Dorsolateral prefrontal cortex (tissue), 120 donors: ENCODE measurements at regions of chr6 and their contacts with region 1.

Region 1: GRCh38 chr6:46848684-46849360 is 55.6 kb downstream of the MEP1A start:
- DNase-seq: peak; percentile 64 to 92 (median 80)
- H3K4me3 ChIP-seq: peak overlapping the region in 39 of 59 donors; percentile 8 to 49 (median 28)
- H3K27ac ChIP-seq: peak overlapping the region in 1 of 59 donors; percentile 53
- H3K27me3 ChIP-seq: no peaks in the 10 kb centered on the region
- CTCF ChIP-seq: peak; percentile 84 to 99 (median 97)

Region 2: DNA sequence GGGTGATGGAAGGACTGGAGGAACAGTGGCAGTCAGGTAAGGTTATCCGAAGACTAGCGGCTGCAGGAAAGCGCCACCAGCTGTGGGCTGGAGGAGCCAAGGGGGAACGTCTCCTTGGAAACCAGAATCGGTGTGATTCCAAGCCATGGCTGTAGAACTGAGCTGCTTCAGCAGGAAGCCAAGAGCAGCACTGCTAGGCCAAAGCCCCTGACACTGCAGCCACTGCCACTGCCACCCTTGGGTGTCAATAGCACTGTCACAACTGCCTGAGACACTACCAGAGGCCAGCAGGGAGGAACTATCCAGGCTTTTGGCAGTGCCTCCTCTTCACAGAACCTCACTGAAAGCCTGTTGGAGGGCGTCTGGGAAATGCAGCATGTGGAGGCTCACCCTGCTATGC is 1181.5 kb before region 1 on chr6:
- intact Hi-C with region 1: no loop called
- DNase-seq: no peak
- H3K4me3 ChIP-seq: no peak overlapping the region
- H3K27ac ChIP-seq: no peak overlapping the region
- H3K27me3 ChIP-seq: peaks cover 0 to 36% (median 9%) of the 10 kb centered on the region in 45 donors
- CTCF ChIP-seq: no peak

Region 3: GRCh38 chr6:46932526-46933319 is 83.9 kb after region 1 on chr6:
- intact Hi-C with region 1: no loop called
- DNase-seq: no peak
- H3K4me3 ChIP-seq: no peak overlapping the region
- H3K27ac ChIP-seq: peak overlapping the region in 5 of 59 donors; percentile 6 to 36 (median 17)
- H3K27me3 ChIP-seq: no peaks in the 10 kb centered on the region
- CTCF ChIP-seq: no peak

Region 4: DNA sequence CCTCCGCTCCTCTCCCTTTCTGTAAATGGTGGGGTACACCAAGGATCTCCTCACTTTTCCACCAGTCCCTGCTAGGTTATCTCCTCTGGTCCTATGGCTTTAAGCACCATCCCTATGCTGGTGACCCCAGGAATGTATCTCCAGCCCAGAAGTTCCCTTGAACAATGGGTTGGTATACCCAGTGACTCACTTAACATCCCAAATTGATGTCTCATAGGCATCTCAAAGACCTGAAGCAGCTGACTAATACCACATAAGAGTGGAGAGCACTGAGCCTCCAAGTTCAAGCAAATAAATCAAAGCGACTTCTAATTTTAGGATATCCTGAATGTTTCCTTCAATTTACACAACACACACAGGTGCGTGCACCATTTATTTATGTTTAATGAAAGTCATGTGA is 145.0 kb after region 1 on chr6:
- intact Hi-C with region 1: loop called in 1 of 2 experiments (anchors 5 kb)
- DNase-seq: no peak
- H3K4me3 ChIP-seq: no peak overlapping the region
- H3K27ac ChIP-seq: no peak overlapping the region
- H3K27me3 ChIP-seq: peaks cover 0 to 11% (median 0%) of the 10 kb centered on the region in 45 donors
- CTCF ChIP-seq: no peak

Region 5: GRCh38 chr6:47047479-47048407 is 198.9 kb after region 1 on chr6:
- intact Hi-C with region 1: loop called (anchors 5 kb)
- DNase-seq: peak in 3 of 10 donors; percentile 38 to 54 (median 43)
- H3K4me3 ChIP-seq: peak overlapping the region in 1 of 59 donors; percentile 18
- H3K27ac ChIP-seq: peak overlapping the region in 1 of 59 donors; percentile 47
- H3K27me3 ChIP-seq: no peaks in the 10 kb centered on the region
- CTCF ChIP-seq: peak; percentile 61 to 90 (median 78)